ENCODE measurements at regions of chr1 and their contacts with region 1.

Region 1: GRCh38 chr1:61049850-61050540 is 32.4 kb upstream of the NFIA start:
- DNase-seq: peak; percentile 88
- H3K4me3 Mint-ChIP-seq: peak overlapping the region; percentile 73
- H3K27ac Mint-ChIP-seq: no peak overlapping the region
- H3K4me1 Mint-ChIP-seq: peaks cover 36% of the 10 kb centered on the region
- H3K27me3 Mint-ChIP-seq: peaks cover 48% of the 10 kb centered on the region

Region 2: GRCh38 chr1:60942896-60943638 is 106.9 kb before region 1 on chr1:
- CTCF ChIA-PET with region 1: no interaction called
- POLR2A ChIA-PET with region 1: no interaction called
- DNase-seq: no peak
- H3K4me3 Mint-ChIP-seq: no peak overlapping the region
- H3K27ac Mint-ChIP-seq: no peak overlapping the region
- H3K4me1 Mint-ChIP-seq: no peaks in the 10 kb centered on the region
- H3K27me3 Mint-ChIP-seq: peaks cover 14% of the 10 kb centered on the region

Region 3: DNA sequence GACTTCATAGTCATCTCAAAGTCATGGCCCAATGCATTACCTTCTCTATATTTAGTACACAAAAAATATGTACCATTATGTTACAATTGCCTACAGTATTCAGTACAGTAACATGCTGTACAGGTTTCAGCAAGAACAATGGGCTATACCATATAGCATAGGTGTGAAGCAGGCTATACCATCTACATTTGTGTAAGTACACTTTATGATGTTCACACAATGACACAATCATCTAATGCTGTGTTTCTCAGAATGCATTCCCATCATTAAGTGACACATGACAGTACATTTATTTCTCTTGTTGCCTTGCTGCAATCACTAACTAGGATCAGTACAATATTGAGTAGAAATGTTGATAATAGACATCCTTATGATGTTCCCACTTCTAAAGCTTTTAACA is 14.1 kb before region 1 on chr1:
- CTCF ChIA-PET with region 1: interaction called, 14 read pairs
- POLR2A ChIA-PET with region 1: no interaction called
- DNase-seq: no peak
- H3K4me3 Mint-ChIP-seq: no peak overlapping the region
- H3K27ac Mint-ChIP-seq: no peak overlapping the region
- H3K4me1 Mint-ChIP-seq: no peaks in the 10 kb centered on the region
- H3K27me3 Mint-ChIP-seq: peaks cover 9% of the 10 kb centered on the region

Region 4: GRCh38 chr1:61077676-61078541 is 27.9 kb after region 1 on chr1:
- CTCF ChIA-PET with region 1: interaction called, 73 read pairs
- POLR2A ChIA-PET with region 1: interaction called, 55 read pairs
- DNase-seq: peak; percentile 91
- H3K4me3 Mint-ChIP-seq: peak overlapping the region; percentile 87
- H3K27ac Mint-ChIP-seq: peak overlapping the region; percentile 95
- H3K4me1 Mint-ChIP-seq: peaks cover 47% of the 10 kb centered on the region
- H3K27me3 Mint-ChIP-seq: peaks cover 33% of the 10 kb centered on the region

Region 5: DNA sequence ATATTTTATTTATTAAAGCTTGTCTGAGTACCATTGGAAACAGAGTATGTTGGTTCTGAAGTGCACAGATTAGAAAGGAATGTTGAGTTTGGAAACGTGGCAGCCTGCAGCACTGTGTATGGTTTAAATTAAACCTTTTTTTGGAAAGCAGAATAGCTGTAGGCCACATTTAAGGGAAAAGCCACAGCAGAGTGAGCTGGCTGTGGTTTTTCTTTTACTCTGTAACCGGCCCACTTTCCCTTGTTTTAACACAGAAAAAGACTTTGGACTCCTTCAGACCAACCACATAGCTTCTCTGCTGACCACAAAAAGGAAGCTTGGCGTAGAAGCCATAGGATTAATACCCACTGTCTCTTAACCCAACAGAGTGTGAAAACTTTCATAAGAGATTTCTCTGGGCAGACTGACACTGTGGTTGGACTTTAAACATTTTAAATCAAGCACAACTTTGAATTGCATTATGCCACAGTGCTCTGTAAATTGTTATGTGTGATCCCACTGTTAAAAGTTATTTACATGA is 107.5 kb after region 1 on chr1:
- CTCF ChIA-PET with region 1: interaction called, 16 read pairs
- POLR2A ChIA-PET with region 1: interaction called, 4 read pairs
- DNase-seq: no peak
- H3K4me3 Mint-ChIP-seq: no peak overlapping the region
- H3K27ac Mint-ChIP-seq: no peak overlapping the region
- H3K4me1 Mint-ChIP-seq: peaks cover 21% of the 10 kb centered on the region
- H3K27me3 Mint-ChIP-seq: peaks cover 15% of the 10 kb centered on the region

Region 6: GRCh38 chr1:61453111-61453961 is 403.3 kb after region 1 on chr1:
- CTCF ChIA-PET with region 1: interaction called, 23 read pairs
- POLR2A ChIA-PET with region 1: interaction called, 6 read pairs
- DNase-seq: peak; percentile 73
- H3K4me3 Mint-ChIP-seq: no peak overlapping the region
- H3K27ac Mint-ChIP-seq: peak overlapping the region; percentile 9
- H3K4me1 Mint-ChIP-seq: peaks cover 9% of the 10 kb centered on the region
- H3K27me3 Mint-ChIP-seq: no peaks in the 10 kb centered on the region

Region 7: DNA sequence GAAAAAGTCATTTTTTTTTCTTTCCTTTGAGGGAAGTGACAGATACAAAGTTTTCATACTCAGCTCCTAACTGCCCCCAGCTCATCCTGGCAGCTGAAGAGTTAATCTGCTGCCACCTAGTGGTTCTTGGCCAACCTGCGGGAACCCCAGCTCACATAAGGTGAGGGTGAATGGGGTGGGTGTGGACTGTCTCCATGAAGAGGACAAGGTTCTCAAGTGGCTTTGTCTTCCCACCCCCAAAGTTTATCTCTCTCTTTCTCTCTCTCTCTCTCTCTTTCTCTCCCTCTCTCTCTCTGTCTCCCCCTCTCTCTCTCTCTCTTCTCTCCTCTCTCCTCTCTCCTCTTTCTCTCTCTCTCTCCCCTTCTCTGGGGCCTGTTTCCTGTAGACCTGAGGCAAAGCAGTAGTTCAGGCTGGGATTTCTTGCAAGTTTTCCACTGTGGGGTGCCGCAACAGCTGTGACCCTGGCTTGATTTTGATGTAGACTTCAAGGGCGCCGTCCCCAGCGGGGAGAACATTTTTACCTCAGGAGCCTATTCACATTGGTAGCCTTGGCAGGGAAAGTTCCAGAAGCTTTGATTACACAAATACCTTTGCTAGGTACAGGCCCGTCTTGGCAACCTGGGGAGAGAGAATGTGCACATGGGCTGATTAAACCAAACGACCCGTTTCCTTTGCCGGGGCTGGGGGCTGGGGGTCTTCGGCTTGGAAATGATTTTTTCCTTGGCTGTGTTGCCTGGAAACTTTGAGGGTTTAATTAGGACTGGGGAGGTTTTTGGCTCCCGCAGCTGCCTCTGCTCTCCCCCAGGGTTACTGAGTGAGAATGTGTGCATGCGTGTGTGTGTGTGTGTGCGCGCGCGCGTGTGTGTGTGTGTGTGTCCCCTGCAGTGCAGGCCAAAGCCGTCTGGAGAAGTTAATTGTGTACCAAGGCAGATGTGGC is 539.0 kb after region 1 on chr1:
- CTCF ChIA-PET with region 1: interaction called, 28 read pairs
- POLR2A ChIA-PET with region 1: no interaction called
- DNase-seq: peak; percentile 63
- H3K4me3 Mint-ChIP-seq: no peak overlapping the region
- H3K27ac Mint-ChIP-seq: no peak overlapping the region
- H3K4me1 Mint-ChIP-seq: no peaks in the 10 kb centered on the region
- H3K27me3 Mint-ChIP-seq: peaks cover 7% of the 10 kb centered on the region